Heart right ventricle (tissue), 16 donors: ENCODE measurements at regions of chr5 and their contacts with region 1.

Region 1: GRCh38 chr5:131634996-131635754 is at the start of gene RAPGEF6:
- DNase-seq: peak; percentile 93 to 99
- ATAC-seq: peak; percentile 96 to 98 (median 98)
- H3K4me3 ChIP-seq: peak within 1 kb of the TSS; percentile 64 to 91 (median 75)
- H3K27ac ChIP-seq: peak within 1 kb of the TSS; percentile 94 to 100 (median 98)
- H3K4me1 ChIP-seq: peaks cover 4 to 53% (median 39%) of the 10 kb centered on the region in 9 donors
- H3K27me3 ChIP-seq: no peaks in the 10 kb centered on the region
- CTCF ChIP-seq: peak in 2 of 9 donors; percentile 2 to 4
- total RNA-seq, gene RAPGEF6: 8.5 to 16.3 (median 11.7) TPM

Region 2: DNA sequence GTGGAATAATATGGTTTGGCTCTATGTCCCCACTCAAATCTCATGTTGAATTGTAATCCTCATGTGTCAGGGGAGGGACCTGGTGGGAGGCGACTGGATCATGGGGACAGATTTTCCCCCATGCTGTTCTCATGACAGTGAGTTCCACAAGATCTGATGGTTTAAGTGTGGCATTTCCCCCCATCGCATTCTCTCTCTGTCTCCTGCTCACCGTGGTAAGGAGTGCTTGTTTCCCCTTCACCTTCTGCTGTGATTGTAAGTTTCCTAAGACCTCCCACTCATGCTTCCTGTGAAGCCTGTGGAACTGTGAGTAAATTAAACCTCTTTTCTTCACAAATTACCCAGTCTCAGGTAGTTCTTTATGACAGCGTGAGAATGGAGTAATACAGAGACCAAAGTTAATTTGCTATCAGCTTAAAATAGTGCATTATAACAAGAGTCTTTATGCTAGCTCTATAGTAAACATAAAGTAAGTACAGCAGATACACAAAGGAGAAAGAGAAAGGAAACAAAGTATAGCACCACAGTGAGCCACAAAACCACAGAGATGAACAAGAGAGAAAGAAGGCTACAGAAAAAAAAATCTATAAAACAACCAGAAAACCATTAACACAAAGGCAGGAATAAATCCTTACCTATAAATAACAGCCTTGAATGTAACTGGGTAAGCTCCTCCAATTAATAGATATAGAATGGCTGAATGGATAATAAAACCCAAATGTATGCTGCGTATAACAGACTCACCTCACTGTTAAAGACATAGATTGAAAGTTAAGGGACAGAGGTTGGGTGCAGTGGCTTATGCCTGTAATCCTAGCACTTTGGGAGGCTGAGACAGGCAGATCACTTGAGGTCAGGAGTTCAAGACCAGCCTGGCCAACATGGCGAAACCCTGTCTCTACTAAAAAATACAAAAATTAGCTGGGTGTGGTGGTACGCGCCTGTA is 39.8 kb before region 1 on chr5:
- intact Hi-C with region 1: loop called in 1 of 10 experiments (anchors 5 kb)
- DNase-seq: no peak
- ATAC-seq: no peak
- H3K4me3 ChIP-seq: no peak overlapping the region
- H3K27ac ChIP-seq: peak overlapping the region in 1 of 10 donors; percentile 17
- H3K4me1 ChIP-seq: peaks cover 0 to 27% (median 13%) of the 10 kb centered on the region in 9 donors
- H3K27me3 ChIP-seq: no peaks in the 10 kb centered on the region
- CTCF ChIP-seq: no peak

Region 3: GRCh38 chr5:132073231-132074013 is 438.2 kb after region 1 on chr5 and contains the start of gene CSF2:
- intact Hi-C with region 1: no loop called
- DNase-seq: no peak
- ATAC-seq: no peak
- H3K4me3 ChIP-seq: no peak within 1 kb of the TSS
- H3K27ac ChIP-seq: no peak within 1 kb of the TSS
- H3K4me1 ChIP-seq: peaks cover 0 to 8% (median 0%) of the 10 kb centered on the region in 9 donors
- H3K27me3 ChIP-seq: no peaks in the 10 kb centered on the region
- CTCF ChIP-seq: no peak
- total RNA-seq, gene CSF2: not detected